CD8-positive, alpha-beta T cell (primary cell): ENCODE measurements at regions of chr3 and their contacts with region 1.

Region 1: GRCh38 chr3:51498876-51499738 is 708 bp downstream of the DCAF1 start:
- DNase-seq: peak; percentile 44 to 88 (median 77)
- ATAC-seq: peak; percentile 46
- H3K4me3 ChIP-seq: peak overlapping the region; percentile 86 to 87
- H3K4me3 Mint-ChIP-seq: peak overlapping the region; percentile 92
- H3K27ac ChIP-seq: peak overlapping the region; percentile 80 to 93
- H3K27ac Mint-ChIP-seq: peak overlapping the region; percentile 99
- H3K4me1 ChIP-seq: peaks cover 16% of the 10 kb centered on the region
- H3K4me1 Mint-ChIP-seq: peaks cover 24% of the 10 kb centered on the region
- H3K27me3 ChIP-seq: no peaks in the 10 kb centered on the region
- H3K27me3 Mint-ChIP-seq: no peaks in the 10 kb centered on the region
- CTCF ChIP-seq: no peak

Region 2: DNA sequence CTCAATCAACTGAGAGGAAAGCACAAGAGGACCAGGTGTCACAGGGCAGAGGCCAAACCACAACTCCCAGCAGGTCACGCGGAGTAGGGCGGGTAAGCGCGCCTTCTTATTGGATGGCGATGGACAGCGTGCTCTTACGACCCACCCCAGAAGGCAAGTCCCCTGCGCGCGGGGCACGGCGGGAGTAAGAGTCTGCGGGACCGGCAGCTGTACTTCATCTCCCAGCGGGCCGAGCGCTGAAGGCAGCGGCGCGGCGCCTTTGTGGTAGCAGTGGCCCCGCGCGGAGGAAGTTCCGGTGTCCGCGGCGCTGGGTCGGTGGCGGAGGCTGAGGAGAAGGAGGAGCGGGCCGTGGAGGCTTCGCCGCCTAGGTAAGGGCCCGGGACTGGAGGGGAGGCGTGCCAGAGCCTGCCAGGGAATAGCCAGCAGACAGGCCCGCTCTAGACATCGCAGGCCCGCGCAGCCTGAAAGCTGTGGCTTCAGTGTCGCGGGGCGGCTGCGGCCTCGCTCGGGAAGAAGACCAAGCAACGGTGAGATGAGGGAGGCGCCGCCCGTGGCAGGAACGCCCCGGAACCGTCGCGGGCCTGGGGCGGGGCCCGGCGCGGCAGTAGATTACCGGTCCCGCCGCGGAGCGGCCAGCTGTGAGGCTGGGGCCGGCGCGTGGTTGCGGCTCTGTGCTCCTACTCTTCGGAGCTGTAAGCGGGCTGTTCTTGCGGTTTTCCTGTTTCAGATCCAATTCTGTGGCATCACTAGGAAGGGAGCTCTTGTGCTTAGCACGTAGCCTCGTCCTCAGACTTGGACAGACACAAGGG is 1559.0 kb before region 1 on chr3 and contains the start of gene RBM6:
- CTCF ChIA-PET with region 1: no interaction called
- POLR2A ChIA-PET with region 1: no interaction called
- intact Hi-C with region 1: loop called in 1 of 2 experiments (anchors 5 kb)
- DNase-seq: peak; percentile 82 to 97 (median 93)
- ATAC-seq: peak; percentile 98
- H3K4me3 ChIP-seq: peak within 1 kb of the TSS; percentile 78 to 98
- H3K4me3 Mint-ChIP-seq: peak within 1 kb of the TSS; percentile 99
- H3K27ac ChIP-seq: peak within 1 kb of the TSS; percentile 67 to 99
- H3K27ac Mint-ChIP-seq: peak within 1 kb of the TSS; percentile 98
- H3K4me1 ChIP-seq: peaks cover 15% of the 10 kb centered on the region
- H3K4me1 Mint-ChIP-seq: peaks cover 30% of the 10 kb centered on the region
- H3K27me3 ChIP-seq: no peaks in the 10 kb centered on the region
- H3K27me3 Mint-ChIP-seq: no peaks in the 10 kb centered on the region
- CTCF ChIP-seq: no peak
- total RNA-seq, gene RBM6: 92.1 to 95.0 TPM

Region 3: DNA sequence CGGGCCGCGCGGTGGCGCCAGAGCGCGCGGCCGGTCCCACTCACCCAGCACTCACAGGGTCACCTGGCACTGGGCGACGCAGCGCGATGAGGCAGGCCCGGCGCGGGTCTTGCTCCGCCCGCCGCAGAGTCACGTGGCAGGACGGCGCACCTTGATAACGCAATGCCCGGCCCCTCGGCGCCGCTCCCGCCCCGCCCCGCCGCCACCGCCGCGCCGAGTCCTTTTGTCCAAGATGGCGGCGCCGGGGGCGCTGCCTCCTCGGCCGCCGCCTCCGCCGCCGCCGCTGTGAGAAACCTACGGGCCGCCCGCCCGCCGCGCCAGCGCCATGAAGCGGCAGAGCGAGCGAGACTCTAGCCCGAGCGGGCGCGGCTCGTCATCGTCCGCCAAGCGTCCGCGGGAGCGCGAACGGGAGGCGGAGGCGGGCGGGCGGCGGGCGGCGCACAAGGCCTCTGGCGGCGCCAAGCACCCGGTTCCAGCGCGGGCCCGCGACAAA is 108.0 kb before region 1 on chr3 and contains the start of gene RBM15B:
- CTCF ChIA-PET with region 1: interaction called, 21 read pairs
- POLR2A ChIA-PET with region 1: interaction called, 4 read pairs
- intact Hi-C with region 1: loop called (anchors 1 kb)
- DNase-seq: peak; percentile 94 to 98 (median 97)
- ATAC-seq: peak; percentile 89
- H3K4me3 ChIP-seq: peak within 1 kb of the TSS; percentile 55 to 61
- H3K4me3 Mint-ChIP-seq: peak within 1 kb of the TSS; percentile 82
- H3K27ac ChIP-seq: peak within 1 kb of the TSS; percentile 71 to 88
- H3K27ac Mint-ChIP-seq: peak within 1 kb of the TSS; percentile 94
- H3K4me1 ChIP-seq: peaks cover 50% of the 10 kb centered on the region
- H3K4me1 Mint-ChIP-seq: peaks cover 68% of the 10 kb centered on the region
- H3K27me3 ChIP-seq: no peaks in the 10 kb centered on the region
- H3K27me3 Mint-ChIP-seq: no peaks in the 10 kb centered on the region
- CTCF ChIP-seq: peak; percentile 70
- total RNA-seq, gene RBM15B: 29.5 to 29.8 TPM

Region 4: GRCh38 chr3:51581529-51581928 is 82.4 kb after region 1 on chr3:
- CTCF ChIA-PET with region 1: no interaction called
- POLR2A ChIA-PET with region 1: no interaction called
- intact Hi-C with region 1: no loop called
- DNase-seq: no peak
- ATAC-seq: no peak
- H3K4me3 ChIP-seq: no peak overlapping the region
- H3K4me3 Mint-ChIP-seq: no peak overlapping the region
- H3K27ac ChIP-seq: no peak overlapping the region
- H3K27ac Mint-ChIP-seq: no peak overlapping the region
- H3K4me1 ChIP-seq: no peaks in the 10 kb centered on the region
- H3K4me1 Mint-ChIP-seq: peaks cover 21% of the 10 kb centered on the region
- H3K27me3 ChIP-seq: no peaks in the 10 kb centered on the region
- H3K27me3 Mint-ChIP-seq: no peaks in the 10 kb centered on the region
- CTCF ChIP-seq: no peak

Region 5: DNA sequence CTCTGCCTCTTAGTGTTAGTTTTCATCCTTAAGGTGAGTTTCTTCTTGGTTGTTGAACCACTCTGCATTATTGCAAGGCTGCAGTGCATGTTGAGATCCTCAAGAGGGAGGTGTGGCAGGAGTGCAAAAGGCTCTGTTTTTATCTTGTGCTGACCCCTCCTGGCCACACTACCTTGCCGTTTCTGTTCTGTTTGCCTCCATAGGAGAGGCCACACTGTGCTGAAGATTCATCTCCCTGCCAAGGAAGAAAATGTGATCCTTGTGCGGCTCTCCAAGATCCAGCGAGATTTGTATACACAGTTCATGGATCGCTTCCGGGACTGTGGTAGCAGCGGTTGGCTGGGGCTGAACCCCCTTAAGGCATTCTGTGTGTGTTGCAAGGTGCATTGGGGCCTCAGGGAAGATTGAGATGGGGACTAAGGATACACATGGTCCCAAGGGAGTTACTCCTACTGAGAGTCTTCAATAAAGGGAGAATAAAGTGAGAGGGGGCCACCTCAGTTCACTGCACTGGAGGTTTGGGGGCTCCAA is 138.9 kb after region 1 on chr3:
- CTCF ChIA-PET with region 1: interaction called, 4 read pairs
- POLR2A ChIA-PET with region 1: no interaction called
- intact Hi-C with region 1: loop called in 1 of 2 experiments (anchors 1 kb)
- DNase-seq: peak in 3 of 9 experiments; percentile 27 to 50 (median 35)
- ATAC-seq: peak; percentile 73
- H3K4me3 ChIP-seq: no peak overlapping the region
- H3K4me3 Mint-ChIP-seq: no peak overlapping the region
- H3K27ac ChIP-seq: no peak overlapping the region
- H3K27ac Mint-ChIP-seq: no peak overlapping the region
- H3K4me1 ChIP-seq: no peaks in the 10 kb centered on the region
- H3K4me1 Mint-ChIP-seq: no peaks in the 10 kb centered on the region
- H3K27me3 ChIP-seq: no peaks in the 10 kb centered on the region
- H3K27me3 Mint-ChIP-seq: no peaks in the 10 kb centered on the region
- CTCF ChIP-seq: peak; percentile 25

Region 6: DNA sequence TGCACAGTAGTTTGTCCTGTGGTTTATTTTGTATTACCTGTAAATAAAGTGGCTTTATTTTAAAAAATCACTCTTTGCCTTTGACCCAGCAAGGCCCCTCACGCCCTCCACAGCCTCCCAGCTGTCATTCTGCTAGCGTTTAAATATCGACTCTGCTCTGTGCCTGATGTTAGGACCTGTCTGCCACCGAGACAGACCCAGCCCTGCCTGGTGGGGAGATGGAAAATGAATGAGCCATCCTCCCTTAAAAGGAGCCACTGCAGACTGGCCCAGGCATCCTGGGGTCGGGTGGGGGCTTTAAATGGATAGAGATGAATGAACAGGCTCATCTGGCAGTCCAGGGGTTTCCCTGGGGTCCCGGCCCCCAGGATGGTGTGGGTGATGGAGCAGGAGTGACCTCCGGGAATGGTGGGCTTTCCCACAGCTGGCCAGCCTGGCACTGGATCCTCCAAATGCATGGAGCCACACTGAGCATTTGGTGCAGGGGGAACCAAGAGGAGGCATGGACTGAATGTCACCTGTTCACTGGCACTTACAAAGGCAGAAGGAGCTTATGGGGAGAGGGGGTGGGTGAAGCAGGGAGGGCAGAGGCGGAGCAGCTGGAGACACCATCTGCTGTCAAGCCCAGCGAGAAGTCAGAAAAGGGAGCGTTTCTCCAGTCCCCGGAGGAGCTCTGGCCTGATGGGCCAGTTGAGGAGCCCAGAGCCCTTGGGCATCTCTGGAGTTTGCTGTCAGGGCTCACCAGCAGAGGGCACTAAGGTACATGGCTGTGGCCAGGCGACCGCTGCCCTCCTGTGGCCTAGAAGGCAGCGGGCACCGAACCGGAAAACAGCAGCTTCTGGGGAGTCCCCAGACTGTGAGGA is 219.7 kb after region 1 on chr3:
- CTCF ChIA-PET with region 1: interaction called, 12 read pairs
- POLR2A ChIA-PET with region 1: no interaction called
- intact Hi-C with region 1: no loop called
- DNase-seq: peak in 4 of 9 experiments; percentile 22 to 66 (median 47)
- ATAC-seq: peak; percentile 14
- H3K4me3 ChIP-seq: no peak overlapping the region
- H3K4me3 Mint-ChIP-seq: no peak overlapping the region
- H3K27ac ChIP-seq: no peak overlapping the region
- H3K27ac Mint-ChIP-seq: no peak overlapping the region
- H3K4me1 ChIP-seq: peaks cover 20% of the 10 kb centered on the region
- H3K4me1 Mint-ChIP-seq: peaks cover 36% of the 10 kb centered on the region
- H3K27me3 ChIP-seq: no peaks in the 10 kb centered on the region
- H3K27me3 Mint-ChIP-seq: no peaks in the 10 kb centered on the region
- CTCF ChIP-seq: no peak